MCF 10A (cell line): ENCODE measurements at regions of chr11 and their contacts with region 1.

Region 1: DNA sequence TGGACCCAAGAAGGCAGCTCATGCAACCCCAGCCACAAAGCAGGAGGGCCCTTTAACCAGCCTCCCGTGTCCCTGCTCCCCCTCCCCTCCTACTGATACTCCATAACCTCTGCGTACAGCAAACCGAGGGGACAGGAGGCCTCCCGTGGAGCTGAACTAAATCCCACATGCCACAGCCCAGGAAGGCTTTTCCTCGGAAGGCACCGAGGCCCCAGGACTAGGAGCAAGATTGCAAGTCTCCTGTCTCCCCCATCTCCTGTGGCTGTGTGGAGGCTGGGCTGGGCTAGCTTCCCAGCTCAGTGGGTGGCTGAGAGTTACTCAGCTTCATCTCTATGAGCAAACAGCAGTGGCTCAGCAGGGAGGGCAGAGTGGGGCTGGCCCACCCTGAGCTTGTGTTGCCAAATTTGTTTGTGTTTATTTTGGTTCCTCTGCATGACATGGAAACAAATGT is 62.7 kb upstream of the NECTIN1 start:
- DNase-seq: peak; percentile 25
- H3K4me3 Mint-ChIP-seq: no peak overlapping the region
- H3K27ac Mint-ChIP-seq: no peak overlapping the region
- H3K4me1 Mint-ChIP-seq: peaks cover 8% of the 10 kb centered on the region
- H3K27me3 Mint-ChIP-seq: peaks cover 11% of the 10 kb centered on the region
- CTCF ChIP-seq: no peak

Region 2: DNA sequence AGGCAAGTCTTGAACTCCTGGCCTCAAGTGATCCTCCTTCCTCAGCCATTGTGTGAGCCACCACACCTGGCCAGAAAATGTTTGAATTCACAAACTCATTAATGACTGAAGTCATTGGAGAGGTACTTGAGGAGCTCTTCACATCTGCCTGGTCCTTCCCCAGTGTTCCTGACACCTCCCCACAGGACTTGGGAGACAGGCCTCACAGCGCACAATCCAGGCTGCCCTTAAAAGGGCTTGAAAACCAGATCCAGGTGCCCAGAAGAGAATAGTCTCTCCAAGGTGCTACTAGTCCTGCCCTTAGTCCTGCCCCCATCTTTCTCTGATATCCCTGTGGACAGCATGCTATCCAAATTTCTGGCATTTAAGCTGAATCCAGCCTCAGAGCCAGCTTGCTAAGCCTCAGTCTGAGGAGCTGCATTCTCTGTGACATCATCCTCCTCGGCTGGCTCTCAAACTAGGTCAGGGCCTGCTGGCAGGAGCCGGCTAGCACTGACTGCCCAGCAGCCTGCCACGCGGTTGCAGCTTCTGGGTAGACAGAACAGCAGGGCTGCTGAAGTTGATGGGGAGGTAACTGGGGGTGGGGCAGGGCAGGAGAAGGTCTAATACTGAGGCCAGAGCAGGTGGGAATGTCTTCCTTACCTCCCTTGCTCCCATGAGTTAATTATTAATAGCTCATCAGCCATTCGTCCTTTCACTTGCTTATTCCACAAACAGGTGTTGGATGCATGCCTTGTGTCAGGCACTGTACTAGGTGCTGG is 27.4 kb before region 1 on chr11:
- CTCF ChIA-PET with region 1: no interaction called
- POLR2A ChIA-PET with region 1: no interaction called
- intact Hi-C with region 1: no loop called
- DNase-seq: no peak
- H3K4me3 Mint-ChIP-seq: no peak overlapping the region
- H3K27ac Mint-ChIP-seq: no peak overlapping the region
- H3K4me1 Mint-ChIP-seq: peaks cover 4% of the 10 kb centered on the region
- H3K27me3 Mint-ChIP-seq: peaks cover 68% of the 10 kb centered on the region
- CTCF ChIP-seq: no peak

Region 3: DNA sequence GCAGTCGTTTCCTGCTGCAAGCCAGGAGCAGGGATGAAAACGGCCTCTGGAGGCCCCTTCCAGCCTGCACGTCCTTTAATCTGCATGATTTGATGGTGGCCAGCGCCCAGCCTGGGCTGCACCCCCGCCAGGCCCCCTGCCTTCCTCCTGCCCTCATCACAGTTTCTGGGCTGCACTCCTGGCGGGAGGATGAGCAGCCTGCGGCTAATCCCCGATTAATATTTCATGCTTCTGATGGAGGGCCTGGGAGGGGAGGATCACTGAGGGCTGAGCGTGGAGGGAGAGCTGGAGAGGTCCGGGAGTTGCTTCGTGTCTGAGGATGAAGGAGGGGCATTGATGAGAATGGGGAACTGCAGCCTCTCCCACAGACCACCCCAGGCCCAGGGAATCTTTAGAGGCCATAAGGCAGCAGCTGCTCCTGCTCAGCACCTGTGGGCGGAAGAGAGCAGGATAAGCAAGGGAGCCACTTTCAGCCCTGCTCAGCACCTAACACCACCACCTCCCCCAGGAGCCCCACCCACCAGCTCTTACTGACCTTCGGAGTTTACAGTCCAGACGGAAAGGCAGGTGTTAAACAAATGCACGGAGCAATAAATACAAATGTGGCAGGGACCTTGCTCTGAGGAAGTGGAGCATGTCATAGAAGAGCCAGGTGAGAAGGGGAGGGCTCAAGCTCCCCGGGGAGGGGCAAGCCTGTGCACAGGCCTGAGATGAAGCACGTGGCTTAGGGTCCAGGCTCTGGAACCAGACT is 72.3 kb after region 1 on chr11:
- CTCF ChIA-PET with region 1: no interaction called
- POLR2A ChIA-PET with region 1: no interaction called
- intact Hi-C with region 1: loop called (anchors 10 kb)
- DNase-seq: no peak
- H3K4me3 Mint-ChIP-seq: no peak overlapping the region
- H3K27ac Mint-ChIP-seq: no peak overlapping the region
- H3K4me1 Mint-ChIP-seq: peaks cover 19% of the 10 kb centered on the region
- H3K27me3 Mint-ChIP-seq: no peaks in the 10 kb centered on the region
- CTCF ChIP-seq: no peak